ENCODE measurements at regions of chr12 and their contacts with region 1.

Region 1: GRCh38 chr12:53746592-53747092 is 5.1 kb downstream of the CISTR start:
- DNase-seq: peak; percentile 88 to 91
- ATAC-seq: peak; percentile 92 to 95
- H3K4me3 ChIP-seq: no peak overlapping the region
- H3K27ac ChIP-seq: peak overlapping the region in 1 of 2 experiments; percentile 49; a peak in 1 of 6 replicates
- H3K4me1 ChIP-seq: no peaks in the 10 kb centered on the region
- CTCF ChIP-seq: peak; percentile 100
- EP300 ChIP-seq: no peak
- POLR2A ChIP-seq: no peak
- RAD21 ChIP-seq: peak; percentile 87 to 90

Region 2: GRCh38 chr12:53696285-53696654 is 50.4 kb before region 1 on chr12:
- CTCF ChIA-PET with region 1: interaction called, 833 read pairs
- POLR2A ChIA-PET with region 1: no interaction called
- DNase-seq: peak; percentile 93 to 100
- ATAC-seq: peak; percentile 90 to 97
- H3K4me3 ChIP-seq: peak overlapping the region; percentile 2; the same call in 1 of the 3 replicates
- H3K27ac ChIP-seq: no peak overlapping the region; a peak in 1 of 6 replicates
- H3K4me1 ChIP-seq: peaks cover 8% of the 10 kb centered on the region
- CTCF ChIP-seq: no peak
- EP300 ChIP-seq: no peak
- POLR2A ChIP-seq: no peak
- RAD21 ChIP-seq: no peak

Region 3: GRCh38 chr12:53719649-53720048 is 27.0 kb before region 1 on chr12:
- CTCF ChIA-PET with region 1: interaction called, 447 read pairs
- POLR2A ChIA-PET with region 1: no interaction called
- DNase-seq: peak in 1 of 2 experiments; percentile 36
- ATAC-seq: peak in 1 of 2 experiments; percentile 71; a peak in 3 of 6 replicates
- H3K4me3 ChIP-seq: no peak overlapping the region
- H3K27ac ChIP-seq: no peak overlapping the region
- H3K4me1 ChIP-seq: no peaks in the 10 kb centered on the region
- CTCF ChIP-seq: no peak
- EP300 ChIP-seq: no peak
- POLR2A ChIP-seq: no peak
- RAD21 ChIP-seq: no peak

Region 4: DNA sequence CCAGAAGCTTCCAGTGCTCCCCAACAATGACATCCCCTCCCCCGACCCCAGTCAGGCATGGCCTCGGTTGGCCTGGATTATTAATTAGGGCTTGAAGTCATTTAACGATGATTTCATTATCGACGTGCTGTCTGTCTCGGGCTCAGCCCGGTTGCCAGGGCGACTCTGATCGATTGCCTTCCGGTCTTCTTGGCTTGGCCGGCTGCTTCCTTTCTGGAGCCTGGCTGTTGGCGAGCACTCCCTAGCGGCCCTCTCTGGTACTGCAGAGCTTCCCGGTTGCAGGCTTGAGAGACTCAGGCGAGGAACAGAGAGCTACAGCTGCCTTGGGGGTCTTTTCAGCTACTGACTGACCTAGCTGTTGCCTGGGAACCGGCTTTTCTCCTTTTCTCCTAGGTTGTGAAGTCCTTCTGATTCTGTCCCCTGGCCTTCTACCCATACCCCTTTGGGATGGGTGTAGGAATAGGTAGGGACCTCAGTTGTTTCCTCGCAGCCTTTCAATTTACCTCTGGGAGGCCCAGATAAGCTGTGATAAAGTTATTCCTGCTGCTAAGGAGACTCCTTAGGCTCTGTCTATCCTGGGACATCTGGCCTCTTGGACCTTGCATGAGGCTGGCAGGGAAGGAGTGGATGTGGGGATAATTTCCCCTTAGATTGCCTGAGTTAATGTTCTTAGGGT is 10.6 kb after region 1 on chr12:
- CTCF ChIA-PET with region 1: interaction called, 199 read pairs
- POLR2A ChIA-PET with region 1: no interaction called
- DNase-seq: peak; percentile 78 to 86
- ATAC-seq: peak; percentile 59 to 84; a peak in 5 of 6 replicates
- H3K4me3 ChIP-seq: peak overlapping the region; percentile 30; the same call in 2 of the 3 replicates
- H3K27ac ChIP-seq: peak overlapping the region; percentile 53 to 73; a peak in 5 of 6 replicates
- H3K4me1 ChIP-seq: peaks cover 11% of the 10 kb centered on the region; the same call in 1 of the 3 replicates
- CTCF ChIP-seq: peak; percentile 65
- EP300 ChIP-seq: no peak
- POLR2A ChIP-seq: no peak
- RAD21 ChIP-seq: peak; percentile 24 to 60; a peak in 3 of 5 replicates

Region 5: DNA sequence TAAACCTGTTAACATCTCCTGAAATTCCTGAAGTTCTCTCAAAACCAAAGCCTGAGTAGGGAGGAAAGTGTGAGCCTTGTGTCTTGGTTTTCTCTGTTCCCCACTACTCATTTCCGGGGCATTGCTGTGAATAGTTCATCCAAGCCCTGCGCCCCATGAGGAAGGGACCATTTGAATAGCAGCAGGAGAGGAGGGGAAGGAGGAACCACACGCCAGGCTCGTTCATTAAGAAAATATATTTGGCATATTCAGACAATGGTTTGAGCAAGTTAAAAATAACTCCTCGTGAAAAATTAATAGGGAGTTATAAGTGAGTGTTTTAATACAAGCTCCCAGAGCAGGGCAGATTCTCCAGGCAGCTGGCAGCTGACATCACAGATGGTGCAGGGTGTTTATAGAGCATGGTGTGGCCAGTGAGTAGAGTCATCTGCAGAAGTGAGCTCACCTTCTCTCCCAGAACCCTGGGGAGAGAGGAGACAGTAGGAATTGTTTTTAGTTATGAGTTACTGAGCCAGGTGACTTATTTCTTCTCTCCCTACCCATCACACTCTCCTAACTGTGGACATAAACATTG is 34.7 kb after region 1 on chr12:
- CTCF ChIA-PET with region 1: interaction called, 10 read pairs
- POLR2A ChIA-PET with region 1: no interaction called
- DNase-seq: no peak
- ATAC-seq: no peak
- H3K4me3 ChIP-seq: no peak overlapping the region
- H3K27ac ChIP-seq: no peak overlapping the region
- H3K4me1 ChIP-seq: 0 out of 3 replicates have a peak, but pooled peaks cover 2% of the 10 kb centered on the region
- CTCF ChIP-seq: no peak
- EP300 ChIP-seq: no peak
- POLR2A ChIP-seq: no peak
- RAD21 ChIP-seq: no peak

Region 6: GRCh38 chr12:53938326-53939140 is 191.9 kb after region 1 on chr12 and contains the start of gene HOXC13:
- CTCF ChIA-PET with region 1: interaction called, 18 read pairs
- POLR2A ChIA-PET with region 1: no interaction called
- DNase-seq: peak; percentile 98 to 100
- ATAC-seq: peak; percentile 80 to 93
- H3K4me3 ChIP-seq: peak within 1 kb of the TSS; percentile 86
- H3K27ac ChIP-seq: peak within 1 kb of the TSS; percentile 85 to 94
- H3K4me1 ChIP-seq: peaks cover 20% of the 10 kb centered on the region; the same call in 2 of the 3 replicates
- CTCF ChIP-seq: no peak
- EP300 ChIP-seq: no peak; a peak in 1 of 5 replicates
- POLR2A ChIP-seq: peak; percentile 58
- RAD21 ChIP-seq: no peak; a peak in 1 of 5 replicates
- polyA plus RNA-seq, gene HOXC13: 3.9 and 6.4 TPM in 2 replicates